PC-9 (cell line): ENCODE measurements at regions of chr17 and their contacts with region 1.

Region 1: DNA sequence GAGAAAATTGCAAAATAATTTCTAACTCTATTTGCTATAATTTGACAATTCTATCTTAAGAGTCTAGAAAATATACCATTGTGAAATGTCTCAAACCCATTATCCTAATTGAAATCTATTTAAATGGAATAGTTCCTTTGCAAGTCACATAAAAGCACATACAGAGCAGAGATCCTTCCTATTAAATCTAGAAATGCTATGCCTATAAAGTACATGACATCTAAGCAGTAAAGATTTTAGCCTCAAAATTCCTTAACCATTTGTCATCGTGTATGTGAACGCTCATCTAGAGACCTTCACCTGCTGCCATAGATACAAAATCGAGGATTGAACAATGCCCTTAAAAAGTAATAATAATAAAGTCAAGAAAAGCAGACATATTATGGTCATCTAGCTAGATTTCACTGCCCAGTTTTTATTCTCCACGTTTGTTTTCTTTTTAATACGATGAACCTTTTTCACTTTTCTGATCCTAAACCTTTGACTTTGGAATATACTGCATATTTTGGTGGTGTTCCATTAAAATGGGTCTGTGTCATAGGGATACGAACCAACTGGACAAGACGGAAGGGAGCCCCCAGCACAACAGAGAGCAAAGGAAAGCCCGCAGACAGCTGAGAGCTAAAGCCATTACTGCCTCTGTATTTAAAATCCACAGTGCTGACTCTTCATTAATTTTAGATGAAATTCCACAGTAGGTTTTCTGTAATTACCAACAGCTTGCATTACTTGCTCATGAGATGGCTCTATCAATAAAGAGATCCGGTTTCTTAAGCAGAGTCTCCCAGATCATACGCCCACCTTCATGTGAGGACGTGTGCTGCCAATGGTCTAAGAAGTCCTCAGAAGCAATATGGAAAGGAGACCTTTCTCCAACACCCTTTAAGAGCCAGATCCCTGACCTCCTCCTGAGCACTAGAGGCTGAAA is 17.6 kb downstream of the TEX2 start:
- DNase-seq: no peak
- H3K4me3 ChIP-seq: no peak overlapping the region
- H3K27ac ChIP-seq: no peak overlapping the region
- H3K4me1 ChIP-seq: 0 out of 2 replicates have a peak, but pooled peaks cover 5% of the 10 kb centered on the region
- H3K27me3 ChIP-seq: no peaks in the 10 kb centered on the region
- CTCF ChIP-seq: no peak

Region 2: DNA sequence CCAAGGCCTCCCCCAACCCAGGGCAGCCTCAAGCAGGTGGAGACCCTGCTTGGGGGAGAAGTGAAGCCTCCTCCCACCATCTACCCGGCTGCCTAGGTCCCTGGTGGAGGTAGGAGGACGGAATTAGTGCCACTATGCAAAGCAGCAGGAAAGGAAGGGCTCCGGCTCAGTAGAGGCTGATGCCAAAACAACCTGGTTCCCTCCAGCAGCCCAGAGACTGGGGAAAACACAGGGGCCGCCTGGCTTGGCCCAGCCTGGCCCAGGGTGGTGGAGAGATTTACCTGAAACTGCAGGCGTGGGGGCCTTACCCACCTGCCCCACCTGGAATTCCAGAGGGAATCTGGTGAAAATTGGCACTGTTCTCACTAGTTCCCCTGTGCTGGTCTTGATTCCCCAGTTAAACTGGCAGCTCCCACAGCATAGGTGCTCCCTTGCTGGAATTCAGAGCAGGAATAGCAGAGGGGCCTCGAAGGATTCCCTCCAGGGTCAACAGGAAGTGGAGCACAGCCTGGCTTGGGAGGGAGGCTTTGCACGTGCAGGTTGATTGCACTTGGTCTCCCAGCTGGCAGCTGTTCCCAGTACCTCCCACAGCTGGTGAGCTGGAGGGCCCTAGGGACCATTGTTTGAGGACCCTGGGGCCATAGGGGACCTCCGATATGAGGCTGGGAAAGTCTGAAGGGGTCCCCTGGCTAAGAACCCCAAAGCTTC is 317.9 kb before region 1 on chr17:
- CTCF ChIA-PET with region 1: no interaction called
- POLR2A ChIA-PET with region 1: no interaction called
- intact Hi-C with region 1: no loop called
- DNase-seq: no peak
- H3K4me3 ChIP-seq: no peak overlapping the region
- H3K27ac ChIP-seq: no peak overlapping the region
- H3K4me1 ChIP-seq: no peaks in the 10 kb centered on the region
- H3K27me3 ChIP-seq: no peaks in the 10 kb centered on the region
- CTCF ChIP-seq: no peak

Region 3: GRCh38 chr17:64202675-64203344 is 42.7 kb before region 1 on chr17:
- CTCF ChIA-PET with region 1: no interaction called
- POLR2A ChIA-PET with region 1: no interaction called
- intact Hi-C with region 1: no loop called
- DNase-seq: peak; percentile 54 to 84
- H3K4me3 ChIP-seq: no peak overlapping the region
- H3K27ac ChIP-seq: no peak overlapping the region
- H3K4me1 ChIP-seq: peaks cover 11% of the 10 kb centered on the region
- H3K27me3 ChIP-seq: no peaks in the 10 kb centered on the region
- CTCF ChIP-seq: no peak

Region 4: GRCh38 chr17:64262417-64263260 is 17.2 kb after region 1 on chr17 and contains the start of gene TEX2:
- CTCF ChIA-PET with region 1: no interaction called
- POLR2A ChIA-PET with region 1: no interaction called
- intact Hi-C with region 1: loop called (anchors 2 kb)
- DNase-seq: peak in 1 of 2 experiments; percentile 31
- H3K4me3 ChIP-seq: peak within 1 kb of the TSS; percentile 71
- H3K27ac ChIP-seq: peak within 1 kb of the TSS; percentile 18; the same call in 1 of the 2 replicates
- H3K4me1 ChIP-seq: peaks cover 26% of the 10 kb centered on the region
- H3K27me3 ChIP-seq: 0 out of 2 replicates have a peak, but pooled peaks cover 9% of the 10 kb centered on the region
- CTCF ChIP-seq: no peak
- total RNA-seq, gene TEX2: 24.0 and 27.9 TPM in 2 replicates

Region 5: DNA sequence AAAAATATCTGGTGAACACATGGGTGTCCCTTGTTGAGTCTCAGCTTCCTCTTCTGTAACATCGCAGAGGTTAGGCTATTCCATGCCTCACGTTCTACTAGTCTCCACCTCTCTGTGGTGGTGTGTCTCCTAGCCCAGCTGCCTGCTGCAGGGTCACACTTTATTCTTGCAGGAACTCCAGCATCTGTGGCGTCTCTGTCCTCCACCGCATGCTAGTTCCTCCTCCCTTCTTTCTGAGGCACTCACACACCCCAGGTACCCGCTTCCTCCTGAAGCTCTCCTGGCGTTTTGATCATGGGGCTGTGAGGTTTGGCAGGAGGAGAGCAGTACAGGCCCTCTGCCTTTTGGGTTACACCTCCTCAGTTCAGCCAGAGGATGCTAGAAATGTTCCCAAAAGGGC is 27.5 kb after region 1 on chr17:
- CTCF ChIA-PET with region 1: no interaction called
- POLR2A ChIA-PET with region 1: no interaction called
- intact Hi-C with region 1: no loop called
- DNase-seq: no peak
- H3K4me3 ChIP-seq: no peak overlapping the region
- H3K27ac ChIP-seq: no peak overlapping the region
- H3K4me1 ChIP-seq: no peaks in the 10 kb centered on the region
- H3K27me3 ChIP-seq: peaks cover 13% of the 10 kb centered on the region
- CTCF ChIP-seq: no peak

Region 6: GRCh38 chr17:64291254-64291851 is 45.9 kb after region 1 on chr17:
- CTCF ChIA-PET with region 1: no interaction called
- POLR2A ChIA-PET with region 1: no interaction called
- intact Hi-C with region 1: no loop called
- DNase-seq: peak in 1 of 2 experiments; percentile 6
- H3K4me3 ChIP-seq: no peak overlapping the region
- H3K27ac ChIP-seq: no peak overlapping the region
- H3K4me1 ChIP-seq: no peaks in the 10 kb centered on the region
- H3K27me3 ChIP-seq: no peaks in the 10 kb centered on the region
- CTCF ChIP-seq: peak; percentile 71